ENCODE measurements at regions of chr4 and their contacts with region 1.

Region 1: GRCh38 chr4:139530833-139531427 is 25.1 kb downstream of the SETD7 start:
- DNase-seq: no peak
- H3K4me3 ChIP-seq: no peak overlapping the region
- H3K27ac ChIP-seq: no peak overlapping the region
- H3K4me1 ChIP-seq: peaks cover 0 to 32% (median 4%) of the 10 kb centered on the region in 6 donors
- H3K27me3 ChIP-seq: no peaks in the 10 kb centered on the region
- CTCF ChIP-seq: peak in 9 of 11 experiments; percentile 40 to 66 (median 59)
- POLR2A ChIP-seq: no peak

Region 2: GRCh38 chr4:139416073-139416673 is 114.8 kb before region 1 on chr4:
- intact Hi-C with region 1: loop called (anchors 10 kb)
- DNase-seq: no peak
- H3K4me3 ChIP-seq: no peak overlapping the region
- H3K27ac ChIP-seq: no peak overlapping the region
- H3K4me1 ChIP-seq: peaks cover 0 to 44% (median 18%) of the 10 kb centered on the region in 6 donors
- H3K27me3 ChIP-seq: no peaks in the 10 kb centered on the region
- CTCF ChIP-seq: peak; percentile 19 to 79 (median 68)
- POLR2A ChIP-seq: no peak

Region 3: DNA sequence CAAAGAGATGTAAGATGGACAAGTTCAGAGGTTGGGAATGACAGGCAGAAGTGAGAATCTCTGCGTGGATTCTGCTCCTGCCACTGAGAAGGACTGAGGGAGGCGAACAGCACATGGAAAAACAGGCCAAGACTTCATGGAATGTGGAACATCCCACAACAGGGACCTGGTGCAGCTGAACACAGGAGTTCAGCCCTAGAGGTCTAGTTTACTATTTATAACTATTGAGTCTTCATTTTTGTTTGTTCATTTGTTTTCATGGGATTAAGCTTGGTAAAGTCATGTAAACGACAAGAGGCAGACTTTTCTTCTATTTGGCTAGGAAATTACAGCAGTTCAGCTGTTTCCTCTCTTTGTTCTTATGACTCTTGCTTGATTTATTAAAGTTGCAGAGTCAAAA is 388.6 kb after region 1 on chr4:
- intact Hi-C with region 1: no loop called
- DNase-seq: no peak
- H3K4me3 ChIP-seq: no peak overlapping the region
- H3K27ac ChIP-seq: peak overlapping the region in 7 of 8 donors; percentile 61 to 75 (median 72)
- H3K4me1 ChIP-seq: peaks cover 12 to 61% (median 37%) of the 10 kb centered on the region in 6 donors
- H3K27me3 ChIP-seq: no peaks in the 10 kb centered on the region
- CTCF ChIP-seq: no peak
- POLR2A ChIP-seq: no peak